ENCODE measurements at regions of chr15 and their contacts with region 1.

Region 1: GRCh38 chr15:84879088-84879792 is 5.2 kb upstream of the SLC28A1 start:
- DNase-seq: no peak
- H3K4me3 ChIP-seq: no peak overlapping the region
- H3K27ac ChIP-seq: no peak overlapping the region
- H3K4me1 ChIP-seq: no peaks in the 10 kb centered on the region
- H3K27me3 ChIP-seq: no peaks in the 10 kb centered on the region
- CTCF ChIP-seq: no peak

Region 2: DNA sequence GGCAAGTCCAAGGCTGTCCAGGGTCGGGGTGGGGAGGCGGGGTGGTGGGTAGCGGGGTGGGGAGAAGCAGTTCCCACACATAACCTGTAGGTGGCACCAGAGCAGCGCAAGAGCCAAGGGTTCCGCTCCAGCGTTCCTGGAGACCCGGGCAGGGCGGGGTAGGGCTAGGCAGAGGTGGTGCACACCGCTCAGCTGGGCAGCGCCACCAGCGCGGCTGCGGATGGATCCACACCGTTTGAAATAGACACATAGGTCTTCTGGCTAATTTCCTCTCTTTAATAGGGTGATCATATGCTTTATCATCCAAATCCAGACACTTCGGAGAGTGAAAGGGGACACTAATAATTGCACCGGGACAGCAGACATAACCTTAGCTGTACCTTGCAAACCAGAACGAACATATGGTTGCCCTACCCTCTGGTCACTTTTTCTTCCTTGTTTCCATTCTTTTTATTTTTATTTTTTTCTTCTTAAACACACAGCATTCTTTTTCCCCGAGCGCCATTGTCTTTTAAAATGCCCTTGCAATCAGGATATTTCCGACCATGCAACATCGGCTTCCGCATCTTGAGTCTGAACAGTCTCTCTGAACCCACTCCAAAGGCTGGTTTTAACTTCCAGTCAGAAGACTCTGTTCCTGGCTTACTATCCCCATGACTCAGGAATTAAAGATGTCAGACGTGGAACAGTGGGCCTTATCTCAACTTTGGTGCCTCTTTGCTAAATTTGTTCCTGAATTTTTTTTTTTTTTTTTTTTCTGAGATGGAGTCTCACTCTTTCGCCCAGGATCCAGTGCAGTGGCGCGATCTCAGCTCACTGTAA is 291.0 kb before region 1 on chr15:
- CTCF ChIA-PET with region 1: interaction called, 4 read pairs
- POLR2A ChIA-PET with region 1: no interaction called
- intact Hi-C with region 1: loop called (anchors 2 kb)
- DNase-seq: peak; percentile 91
- H3K4me3 ChIP-seq: peak overlapping the region; percentile 39
- H3K27ac ChIP-seq: no peak overlapping the region
- H3K4me1 ChIP-seq: peaks cover 12% of the 10 kb centered on the region
- H3K27me3 ChIP-seq: no peaks in the 10 kb centered on the region
- CTCF ChIP-seq: peak; percentile 70

Measured in A673 (cell line).